ENCODE measurements at regions of chr4 and their contacts with region 1.

Region 1: GRCh38 chr4:101328063-101328602 is 19.2 kb downstream of the PPP3CA start:
- DNase-seq: peak; percentile 21
- H3K4me3 Mint-ChIP-seq: peak overlapping the region; percentile 45
- H3K27ac Mint-ChIP-seq: peak overlapping the region; percentile 81
- H3K4me1 Mint-ChIP-seq: peaks cover 31% of the 10 kb centered on the region
- H3K27me3 Mint-ChIP-seq: peaks cover 24% of the 10 kb centered on the region

Region 2: GRCh38 chr4:100823066-100823992 is 504.8 kb before region 1 on chr4:
- intact Hi-C with region 1: loop called (anchors 5 kb)
- DNase-seq: peak; percentile 32
- H3K4me3 Mint-ChIP-seq: no peak overlapping the region
- H3K27ac Mint-ChIP-seq: peak overlapping the region; percentile 79
- H3K4me1 Mint-ChIP-seq: peaks cover 40% of the 10 kb centered on the region
- H3K27me3 Mint-ChIP-seq: no peaks in the 10 kb centered on the region

Region 3: GRCh38 chr4:101155368-101155767 is 172.8 kb before region 1 on chr4:
- intact Hi-C with region 1: loop called (anchors 5 kb)
- DNase-seq: no peak
- H3K4me3 Mint-ChIP-seq: no peak overlapping the region
- H3K27ac Mint-ChIP-seq: no peak overlapping the region
- H3K4me1 Mint-ChIP-seq: peaks cover 28% of the 10 kb centered on the region
- H3K27me3 Mint-ChIP-seq: no peaks in the 10 kb centered on the region

Region 4: DNA sequence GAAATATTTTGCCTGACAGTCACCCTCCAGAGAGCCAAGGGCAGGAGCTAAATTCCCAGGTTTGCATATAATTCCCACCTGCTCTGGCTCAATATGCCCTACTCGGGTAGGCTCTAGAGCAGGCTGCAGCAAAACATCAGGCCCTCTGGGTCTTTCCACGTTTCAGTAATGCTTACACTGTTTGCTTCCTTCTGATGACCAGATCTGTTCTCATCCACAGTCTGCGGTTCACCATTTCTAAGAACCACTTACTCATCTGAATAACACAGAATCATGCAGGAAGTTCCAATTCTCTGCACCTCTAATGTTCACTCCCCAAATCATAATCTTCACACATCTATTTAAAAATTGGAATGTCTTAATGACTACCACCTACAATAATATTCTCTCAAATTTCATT is 122.2 kb before region 1 on chr4:
- intact Hi-C with region 1: loop called (anchors 1 kb)
- DNase-seq: peak; percentile 56
- H3K4me3 Mint-ChIP-seq: peak overlapping the region; percentile 0
- H3K27ac Mint-ChIP-seq: peak overlapping the region; percentile 67
- H3K4me1 Mint-ChIP-seq: peaks cover 42% of the 10 kb centered on the region
- H3K27me3 Mint-ChIP-seq: no peaks in the 10 kb centered on the region

Region 5: DNA sequence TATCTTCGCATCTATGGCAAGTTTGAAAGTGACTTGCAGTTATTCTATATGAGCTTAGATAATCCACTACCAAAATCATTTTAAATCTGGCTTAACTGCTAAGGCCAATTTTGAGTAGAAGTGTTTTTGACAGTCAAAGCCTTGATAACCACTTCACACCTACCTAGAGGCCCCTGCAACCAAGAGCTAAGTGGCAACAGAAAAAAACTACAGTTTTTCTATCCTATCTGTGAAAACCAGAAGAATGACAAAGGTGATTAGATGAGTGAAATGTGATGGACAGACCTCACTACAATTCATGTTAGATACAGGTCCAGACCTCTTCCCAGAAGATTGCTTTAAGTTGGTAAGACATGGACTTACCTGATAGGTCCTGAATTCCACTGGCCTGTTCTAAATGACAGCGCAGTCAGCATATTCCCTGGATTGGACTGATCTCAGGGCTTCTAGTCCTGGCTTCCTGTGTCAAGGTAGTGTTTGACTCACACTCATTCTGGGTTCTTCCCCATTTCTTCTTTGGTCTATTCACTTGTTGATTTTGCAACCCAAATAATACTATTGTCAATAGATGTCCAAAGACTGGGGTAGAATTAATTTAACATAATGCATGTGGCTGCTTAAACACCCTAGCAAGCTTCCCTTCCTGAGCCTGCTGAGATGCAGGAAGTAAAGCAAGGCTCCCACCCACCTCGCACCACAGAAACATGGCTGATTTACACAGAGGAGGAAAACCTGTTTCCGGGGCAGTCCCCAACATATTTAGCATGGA is 45.9 kb before region 1 on chr4:
- intact Hi-C with region 1: loop called (anchors 1 kb)
- DNase-seq: peak; percentile 8
- H3K4me3 Mint-ChIP-seq: peak overlapping the region; percentile 31
- H3K27ac Mint-ChIP-seq: no peak overlapping the region
- H3K4me1 Mint-ChIP-seq: peaks cover 43% of the 10 kb centered on the region
- H3K27me3 Mint-ChIP-seq: no peaks in the 10 kb centered on the region

Region 6: DNA sequence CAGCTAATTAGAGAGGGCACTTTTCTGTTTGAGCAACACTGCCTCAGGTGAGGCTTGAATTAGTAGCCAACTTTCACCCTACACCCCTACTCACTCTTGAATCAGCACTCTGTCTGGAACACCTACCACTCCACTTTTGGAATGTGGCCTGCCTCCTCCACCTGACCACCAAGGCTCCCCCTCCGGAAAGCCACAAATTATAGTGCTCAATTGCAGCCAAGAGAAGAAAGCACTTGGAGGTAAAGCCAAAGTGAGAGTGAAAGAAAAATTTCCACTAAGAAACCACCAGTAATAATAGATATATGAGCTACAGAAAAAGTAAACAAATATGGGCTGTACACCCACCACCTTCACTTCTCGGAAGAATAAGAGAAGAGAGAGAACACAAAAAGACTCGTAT is 21.9 kb before region 1 on chr4:
- intact Hi-C with region 1: loop called (anchors 2 kb)
- DNase-seq: no peak
- H3K4me3 Mint-ChIP-seq: no peak overlapping the region
- H3K27ac Mint-ChIP-seq: no peak overlapping the region
- H3K4me1 Mint-ChIP-seq: peaks cover 12% of the 10 kb centered on the region
- H3K27me3 Mint-ChIP-seq: peaks cover 9% of the 10 kb centered on the region

Region 7: GRCh38 chr4:101400096-101400495 is 72.0 kb after region 1 on chr4:
- intact Hi-C with region 1: loop called (anchors 5 kb)
- DNase-seq: peak; percentile 12
- H3K4me3 Mint-ChIP-seq: peak overlapping the region; percentile 2
- H3K27ac Mint-ChIP-seq: peak overlapping the region; percentile 71
- H3K4me1 Mint-ChIP-seq: peaks cover 22% of the 10 kb centered on the region
- H3K27me3 Mint-ChIP-seq: peaks cover 6% of the 10 kb centered on the region

Measured in activated T-helper 1 cell treated with anti-CD3 and anti-CD28 coated beads, Interleukin-12 subunit alpha, Interleukin-12 subunit beta, Interleukin-2, Interleukin-4 antibody, amounts not matched to agents 30 ng/mL and 10 ng/mL and 1 ng/mL, durations not matched to agents 14 hours and 24 hours and 36 hours (primary cell).